ENCODE measurements at regions of chr17 and their contacts with region 1.

Region 1: DNA sequence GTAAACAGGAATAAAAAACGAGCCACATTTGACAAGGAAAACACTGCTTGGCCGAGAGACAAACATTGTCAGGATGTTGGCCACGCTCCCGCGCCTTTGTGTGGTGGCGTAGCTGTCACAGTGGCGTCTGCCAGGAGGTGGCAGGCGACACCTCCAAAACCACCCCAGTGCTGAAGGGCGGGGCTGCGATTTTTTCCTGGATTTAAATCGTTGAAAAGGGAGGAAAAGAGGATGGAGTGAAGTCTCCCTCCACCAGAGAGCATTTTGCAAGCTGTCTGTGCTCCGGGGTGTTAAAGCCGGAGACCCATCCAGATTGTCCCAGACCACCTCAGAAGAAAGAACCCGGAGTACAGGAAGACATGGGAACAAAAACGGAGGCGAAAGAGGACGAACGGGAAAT is 12.7 kb downstream of the MRM3 start:
- DNase-seq: peak; percentile 77 to 94 (median 88)

Region 2: DNA sequence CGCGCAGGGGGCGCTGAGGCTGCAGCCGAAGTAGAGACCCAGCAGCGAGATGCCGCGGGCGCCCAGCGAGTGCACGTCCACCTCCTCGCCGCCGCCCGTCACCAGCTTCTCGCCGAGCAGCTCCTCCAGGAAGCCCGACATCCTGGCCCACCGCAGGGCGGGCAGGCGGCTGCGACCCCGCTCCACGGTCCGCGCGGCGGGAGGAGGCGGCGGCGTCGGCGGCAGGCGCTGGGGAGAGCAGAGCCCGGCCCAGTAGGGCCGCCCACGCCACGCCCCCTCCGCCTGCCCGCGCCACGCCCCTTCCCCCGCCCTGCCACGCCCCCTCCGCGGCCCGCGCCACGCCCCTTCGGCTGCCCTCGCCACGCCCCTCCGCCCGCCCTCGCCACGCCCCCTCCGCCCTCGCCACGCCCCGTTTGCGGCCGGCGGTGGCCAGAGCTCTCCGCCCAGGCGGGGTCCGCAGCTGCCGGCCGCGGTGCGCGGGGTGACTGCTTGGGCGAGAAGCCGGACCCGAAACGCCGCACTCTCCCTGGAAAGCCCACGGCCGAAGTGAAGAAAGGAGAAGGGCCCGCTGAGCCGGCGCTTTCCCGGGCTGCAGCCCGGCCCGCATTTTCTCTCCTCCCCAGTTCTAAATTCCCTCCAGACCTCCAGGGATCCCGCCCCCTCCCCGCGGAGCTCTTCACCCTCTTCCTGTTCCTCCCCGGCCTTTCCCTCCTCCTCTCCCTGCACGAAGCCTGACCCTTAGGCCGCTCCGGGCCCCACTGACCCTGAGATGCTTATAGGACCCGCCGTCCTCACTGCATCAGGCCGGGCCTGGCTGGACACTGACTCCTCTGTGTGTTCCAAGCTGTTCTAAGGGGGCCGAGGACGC is 184.9 kb after region 1 on chr17 and contains the start of gene NXN:
- intact Hi-C with region 1: loop called (anchors 2 kb)
- DNase-seq: peak; percentile 27 to 95 (median 88)

Measured in head of caudate nucleus (tissue), 42 donors.